Activated naive CD4-positive, alpha-beta T cell treated with anti-CD3 and anti-CD28 coated beads, Interleukin-2, amount 10 ng/mL, durations not matched to agents 7 days and 5 days (primary cell): ENCODE measurements at regions of chr1 and their contacts with region 1.

Region 1: GRCh38 chr1:181479137-181479745 is 4.1 kb upstream of the CACNA1E start:
- DNase-seq: peak; percentile 42
- H3K4me3 Mint-ChIP-seq: no peak overlapping the region
- H3K27ac Mint-ChIP-seq: no peak overlapping the region
- H3K4me1 Mint-ChIP-seq: peaks cover 15% of the 10 kb centered on the region
- H3K27me3 Mint-ChIP-seq: peaks cover 52% of the 10 kb centered on the region

Region 2: GRCh38 chr1:181423392-181423837 is 55.8 kb before region 1 on chr1:
- CTCF ChIA-PET with region 1: no interaction called
- DNase-seq: peak; percentile 78
- H3K4me3 Mint-ChIP-seq: no peak overlapping the region
- H3K27ac Mint-ChIP-seq: no peak overlapping the region
- H3K4me1 Mint-ChIP-seq: peaks cover 10% of the 10 kb centered on the region
- H3K27me3 Mint-ChIP-seq: peaks cover 35% of the 10 kb centered on the region

Region 3: GRCh38 chr1:181936768-181937581 is 457.7 kb after region 1 on chr1:
- CTCF ChIA-PET with region 1: interaction called, 18 read pairs
- DNase-seq: peak; percentile 60
- H3K4me3 Mint-ChIP-seq: no peak overlapping the region
- H3K27ac Mint-ChIP-seq: no peak overlapping the region
- H3K4me1 Mint-ChIP-seq: no peaks in the 10 kb centered on the region
- H3K27me3 Mint-ChIP-seq: peaks cover 3% of the 10 kb centered on the region